Activated CD8-positive, alpha-beta memory T cell treated with anti-CD3 and anti-CD28 coated beads, Interleukin-2, amount 10 ng/mL, durations not matched to agents 7 days and 5 days (primary cell): ENCODE measurements at regions of chr1 and their contacts with region 1.

Region 1: GRCh38 chr1:32247983-32248889 is 1.2 kb downstream of the FAM167B start:
- DNase-seq: peak; percentile 90
- ATAC-seq: peak; percentile 38
- H3K4me3 Mint-ChIP-seq: peak overlapping the region; percentile 57
- H3K27ac Mint-ChIP-seq: peak overlapping the region; percentile 94
- H3K4me1 Mint-ChIP-seq: peaks cover 47% of the 10 kb centered on the region
- H3K27me3 Mint-ChIP-seq: no peaks in the 10 kb centered on the region

Region 2: DNA sequence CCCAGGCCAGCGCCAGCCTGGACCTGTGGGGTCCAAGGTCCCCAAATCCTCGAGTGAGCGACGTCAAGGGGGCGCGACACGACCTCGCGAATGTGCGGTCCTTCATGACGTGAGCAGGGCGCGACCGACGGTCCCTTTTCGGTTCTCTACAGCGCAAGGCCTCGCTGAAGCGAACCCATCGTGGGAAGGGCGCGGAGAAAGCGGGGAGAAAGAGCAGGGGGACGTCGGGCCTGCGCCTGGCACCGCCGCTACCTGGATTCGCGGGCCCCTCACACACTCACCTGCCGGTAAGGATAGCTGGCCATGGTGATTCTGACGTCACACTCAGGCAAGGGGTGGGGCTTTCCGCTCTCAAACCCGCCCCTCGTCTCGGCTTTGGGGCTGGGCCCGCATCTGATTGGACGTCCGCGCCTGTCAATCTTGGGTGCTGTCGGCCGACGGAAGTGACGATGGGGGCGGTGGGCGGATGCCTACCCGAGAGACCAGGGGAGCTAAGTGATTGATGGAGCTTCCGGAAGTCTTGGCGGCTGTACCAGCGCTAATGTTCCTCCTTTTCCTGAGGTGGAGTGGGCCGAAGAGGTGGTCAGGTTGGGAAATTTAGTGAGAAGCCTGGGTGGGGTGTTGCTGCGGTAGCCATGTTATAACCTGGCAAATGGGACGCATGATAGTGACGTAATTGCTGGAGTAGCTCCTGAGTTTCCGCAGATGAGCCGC is 603.5 kb before region 1 on chr1 and contains the start of gene PEF1:
- CTCF ChIA-PET with region 1: no interaction called
- DNase-seq: peak; percentile 99
- ATAC-seq: peak; percentile 85
- H3K4me3 Mint-ChIP-seq: peak within 1 kb of the TSS; percentile 96
- H3K27ac Mint-ChIP-seq: peak within 1 kb of the TSS; percentile 100
- H3K4me1 Mint-ChIP-seq: peaks cover 29% of the 10 kb centered on the region
- H3K27me3 Mint-ChIP-seq: no peaks in the 10 kb centered on the region
- total RNA-seq, gene PEF1: 45.9 to 47.1 TPM

Region 3: DNA sequence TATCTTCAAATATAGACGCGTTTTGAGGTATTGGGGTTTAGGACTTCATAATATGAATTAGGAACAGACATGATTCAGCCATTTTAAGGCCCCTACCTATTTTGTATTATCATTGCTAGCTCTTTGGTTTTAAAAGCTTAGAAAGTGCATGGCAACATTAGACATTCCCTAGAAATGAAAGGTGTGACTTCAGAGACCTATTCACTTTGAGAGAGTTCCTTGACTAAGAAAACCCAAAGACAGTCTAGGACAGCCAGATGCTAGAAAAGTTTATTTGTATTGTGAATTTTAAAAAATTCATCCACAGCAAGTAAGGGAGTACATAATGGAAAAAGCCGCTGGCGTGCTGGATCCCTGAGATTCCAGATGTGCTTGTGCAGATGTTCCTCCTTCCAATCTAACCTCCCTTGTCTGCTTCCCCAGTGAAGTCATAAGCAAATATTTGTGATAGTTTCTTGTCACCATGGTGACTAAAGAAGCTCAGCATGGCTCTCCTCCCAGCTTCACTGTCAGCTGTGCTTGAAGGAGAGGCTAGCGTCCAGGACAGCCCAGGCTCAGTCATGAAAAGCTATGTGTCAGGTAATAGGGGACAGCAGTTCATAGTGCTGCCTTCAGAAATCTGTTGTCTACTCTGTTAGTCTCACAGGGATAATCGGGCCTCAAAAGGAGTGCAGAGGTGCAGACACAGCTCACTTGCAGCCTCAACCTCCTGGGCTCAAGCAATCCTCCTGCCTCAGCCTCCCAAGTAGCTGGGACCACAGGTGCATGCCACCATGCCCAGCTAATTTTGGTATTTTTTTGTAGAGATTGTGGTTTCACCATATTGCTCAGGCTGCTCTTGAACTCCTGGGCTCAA is 105.6 kb before region 1 on chr1:
- CTCF ChIA-PET with region 1: no interaction called
- DNase-seq: no peak
- ATAC-seq: no peak
- H3K4me3 Mint-ChIP-seq: no peak overlapping the region
- H3K27ac Mint-ChIP-seq: no peak overlapping the region
- H3K4me1 Mint-ChIP-seq: peaks cover 58% of the 10 kb centered on the region
- H3K27me3 Mint-ChIP-seq: no peaks in the 10 kb centered on the region

Region 4: DNA sequence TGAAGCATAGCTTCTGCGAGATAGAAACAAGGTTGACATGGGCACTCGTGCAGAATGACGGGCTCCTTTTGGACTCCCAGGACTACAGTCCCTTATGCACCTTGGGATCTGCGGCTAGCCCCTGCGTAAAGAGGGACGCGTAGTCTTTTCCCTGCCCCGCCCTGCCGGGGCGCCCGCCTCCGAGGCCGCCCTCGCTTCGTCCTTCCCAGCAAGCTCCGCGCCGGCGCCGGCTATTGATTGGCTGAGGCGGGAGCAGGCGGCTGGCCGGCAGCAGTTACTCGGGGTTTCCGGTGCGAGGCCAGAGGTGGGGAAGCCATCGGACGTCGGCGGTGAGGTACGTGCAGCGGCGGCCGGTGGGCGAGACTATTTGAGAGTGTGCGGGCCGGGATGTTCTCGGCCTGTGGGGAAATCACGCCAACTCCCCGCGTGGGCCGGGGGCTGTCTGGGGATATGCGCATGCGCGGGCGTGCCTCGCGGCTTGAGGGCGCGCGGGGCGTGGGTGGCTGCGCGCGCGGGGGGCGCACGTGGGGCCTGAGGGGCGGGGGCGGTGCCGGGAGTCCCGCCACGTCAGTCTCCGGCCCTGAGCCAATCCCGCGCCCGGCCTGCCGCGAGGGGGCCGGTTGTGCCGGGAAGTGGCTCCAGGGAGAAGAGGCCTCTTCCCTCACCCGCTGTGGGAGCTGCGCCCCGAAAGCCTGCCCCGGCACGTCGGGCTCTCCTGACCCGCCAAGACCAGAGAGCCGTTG is 68.6 kb before region 1 on chr1 and contains the start of gene TXLNA:
- CTCF ChIA-PET with region 1: interaction called, 11 read pairs
- DNase-seq: peak; percentile 95
- ATAC-seq: peak; percentile 91
- H3K4me3 Mint-ChIP-seq: peak within 1 kb of the TSS; percentile 81
- H3K27ac Mint-ChIP-seq: peak within 1 kb of the TSS; percentile 98
- H3K4me1 Mint-ChIP-seq: peaks cover 41% of the 10 kb centered on the region
- H3K27me3 Mint-ChIP-seq: no peaks in the 10 kb centered on the region
- total RNA-seq, gene TXLNA: 85.8 to 104 TPM

Region 5: GRCh38 chr1:32205401-32206370 is 42.5 kb before region 1 on chr1 and contains the start of gene IQCC:
- CTCF ChIA-PET with region 1: interaction called, 17 read pairs
- DNase-seq: peak; percentile 89
- ATAC-seq: peak; percentile 82
- H3K4me3 Mint-ChIP-seq: peak within 1 kb of the TSS; percentile 90
- H3K27ac Mint-ChIP-seq: peak within 1 kb of the TSS; percentile 87
- H3K4me1 Mint-ChIP-seq: peaks cover 32% of the 10 kb centered on the region
- H3K27me3 Mint-ChIP-seq: no peaks in the 10 kb centered on the region
- total RNA-seq, gene IQCC: 5.4 to 7.2 TPM

Region 6: DNA sequence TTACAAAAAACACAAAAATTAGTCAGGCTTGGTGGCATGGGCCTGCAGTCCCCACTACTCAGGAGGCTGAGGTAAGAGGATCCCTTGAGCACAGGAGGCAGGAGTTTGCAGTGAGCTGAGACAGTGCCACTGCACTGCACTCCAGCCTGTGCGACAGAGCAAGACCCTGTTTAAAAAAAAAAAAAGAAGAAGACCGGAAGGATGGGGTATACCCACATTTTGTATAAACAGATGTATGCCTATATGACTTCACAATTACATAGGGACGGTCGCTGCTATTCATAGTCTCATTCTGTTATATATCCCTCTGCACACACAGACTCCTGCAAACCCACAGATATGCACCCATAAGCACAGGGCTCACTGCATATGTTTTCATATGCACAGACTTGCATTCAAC is 15.5 kb after region 1 on chr1:
- CTCF ChIA-PET with region 1: interaction called, 94 read pairs
- DNase-seq: peak; percentile 70
- ATAC-seq: peak; percentile 86
- H3K4me3 Mint-ChIP-seq: peak overlapping the region; percentile 22
- H3K27ac Mint-ChIP-seq: peak overlapping the region; percentile 85
- H3K4me1 Mint-ChIP-seq: peaks cover 54% of the 10 kb centered on the region
- H3K27me3 Mint-ChIP-seq: no peaks in the 10 kb centered on the region

Region 7: DNA sequence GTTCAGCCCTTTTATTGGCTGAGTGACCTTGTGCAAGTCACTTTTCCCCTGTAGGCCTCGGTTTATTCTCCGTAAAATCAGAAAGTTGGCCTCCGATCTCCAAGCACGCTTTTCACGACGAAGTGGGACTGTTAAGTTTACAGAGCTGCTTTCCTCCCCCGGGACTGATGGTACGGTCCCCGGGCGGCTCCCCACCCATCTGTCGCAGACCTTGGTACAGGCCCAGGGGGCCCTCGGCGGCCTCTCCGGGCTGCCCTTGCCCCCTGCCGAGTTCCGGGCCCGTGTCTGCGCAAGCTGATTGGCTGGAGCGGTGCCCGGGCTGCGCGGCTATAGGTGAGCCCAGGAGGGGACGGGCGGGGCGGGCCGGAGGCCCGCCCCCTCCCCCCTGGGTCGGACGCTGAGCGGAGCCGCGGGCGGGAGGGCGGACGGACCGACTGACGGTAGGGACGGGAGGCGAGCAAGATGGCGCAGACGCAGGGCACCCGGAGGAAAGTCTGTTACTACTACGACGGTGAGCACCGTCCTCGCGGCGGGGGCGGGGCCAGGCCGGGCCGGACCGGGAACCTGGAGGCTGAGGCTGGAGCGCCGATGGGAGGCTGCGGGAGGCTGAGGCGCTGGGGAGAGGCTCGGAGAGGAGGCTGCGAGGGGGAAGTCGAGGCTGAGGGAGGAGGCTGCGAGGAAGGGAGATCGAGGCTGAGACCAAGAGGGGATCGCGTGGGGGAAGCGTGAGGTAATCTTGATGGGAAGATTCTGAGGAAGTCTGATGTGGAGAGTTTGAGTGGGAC is 43.7 kb after region 1 on chr1 and contains the start of gene HDAC1:
- CTCF ChIA-PET with region 1: interaction called, 15 read pairs
- DNase-seq: peak; percentile 98
- ATAC-seq: peak; percentile 99
- H3K4me3 Mint-ChIP-seq: peak within 1 kb of the TSS; percentile 99
- H3K27ac Mint-ChIP-seq: peak within 1 kb of the TSS; percentile 98
- H3K4me1 Mint-ChIP-seq: peaks cover 49% of the 10 kb centered on the region
- H3K27me3 Mint-ChIP-seq: no peaks in the 10 kb centered on the region
- total RNA-seq, gene HDAC1: 183 to 189 TPM